ENCODE measurements at regions of chr16 and their contacts with region 1.

Region 1: GRCh38 chr16:70289229-70290098 is at the start of gene AARS1:
- DNase-seq: peak; percentile 97
- H3K4me3 ChIP-seq: peak within 1 kb of the TSS; percentile 65 to 76
- H3K27ac ChIP-seq: peak within 1 kb of the TSS; percentile 85 to 88
- H3K4me1 ChIP-seq: peaks cover 2 to 10% of the 10 kb centered on the region in 2 experiments; a peak in 2 of 4 replicates
- H3K27me3 ChIP-seq: no peaks in the 10 kb centered on the region
- CTCF ChIP-seq: no peak
- EP300 ChIP-seq: no peak
- RAD21 ChIP-seq: no peak
- polyA plus RNA-seq, gene AARS1: 70.5 and 77.3 TPM in 2 replicates

Region 2: GRCh38 chr16:70267516-70267915 is 21.9 kb before region 1 on chr16:
- CTCF ChIA-PET with region 1: interaction called, 14 read pairs
- POLR2A ChIA-PET with region 1: interaction called, 3 read pairs
- DNase-seq: peak; percentile 70
- H3K4me3 ChIP-seq: no peak overlapping the region
- H3K27ac ChIP-seq: no peak overlapping the region
- H3K4me1 ChIP-seq: no peaks in the 10 kb centered on the region
- H3K27me3 ChIP-seq: no peaks in the 10 kb centered on the region
- CTCF ChIP-seq: peak; percentile 72
- EP300 ChIP-seq: no peak
- RAD21 ChIP-seq: peak; percentile 55

Region 3: GRCh38 chr16:70345840-70346239 is 56.4 kb after region 1 on chr16:
- CTCF ChIA-PET with region 1: no interaction called
- POLR2A ChIA-PET with region 1: interaction called, 14 read pairs
- DNase-seq: no peak
- H3K4me3 ChIP-seq: peak overlapping the region; percentile 75 to 88
- H3K27ac ChIP-seq: peak overlapping the region in 1 of 2 experiments; percentile 89; a peak in 2 of 4 replicates
- H3K4me1 ChIP-seq: peaks cover 2 to 10% of the 10 kb centered on the region in 2 experiments; a peak in 2 of 4 replicates
- H3K27me3 ChIP-seq: no peaks in the 10 kb centered on the region
- CTCF ChIP-seq: no peak
- EP300 ChIP-seq: no peak
- RAD21 ChIP-seq: no peak

Measured in SK-N-SH (cell line).